ENCODE measurements at regions of chr6 and their contacts with region 1.

Region 1: GRCh38 chr6:71349395-71349794 is 60.8 kb downstream of the OGFRL1 start:
- DNase-seq: no peak
- ATAC-seq: peak; percentile 64

Region 2: GRCh38 chr6:71190809-71191208 is 158.6 kb before region 1 on chr6:
- intact Hi-C with region 1: loop called (anchors 2 kb)
- DNase-seq: no peak
- ATAC-seq: no peak

Region 3: GRCh38 chr6:71288228-71289001 is 61.0 kb before region 1 on chr6 and contains the start of gene OGFRL1:
- intact Hi-C with region 1: loop called (anchors 5 kb)
- DNase-seq: peak; percentile 87
- ATAC-seq: peak; percentile 97
- total RNA-seq, gene OGFRL1: 7.7 TPM

Region 4: DNA sequence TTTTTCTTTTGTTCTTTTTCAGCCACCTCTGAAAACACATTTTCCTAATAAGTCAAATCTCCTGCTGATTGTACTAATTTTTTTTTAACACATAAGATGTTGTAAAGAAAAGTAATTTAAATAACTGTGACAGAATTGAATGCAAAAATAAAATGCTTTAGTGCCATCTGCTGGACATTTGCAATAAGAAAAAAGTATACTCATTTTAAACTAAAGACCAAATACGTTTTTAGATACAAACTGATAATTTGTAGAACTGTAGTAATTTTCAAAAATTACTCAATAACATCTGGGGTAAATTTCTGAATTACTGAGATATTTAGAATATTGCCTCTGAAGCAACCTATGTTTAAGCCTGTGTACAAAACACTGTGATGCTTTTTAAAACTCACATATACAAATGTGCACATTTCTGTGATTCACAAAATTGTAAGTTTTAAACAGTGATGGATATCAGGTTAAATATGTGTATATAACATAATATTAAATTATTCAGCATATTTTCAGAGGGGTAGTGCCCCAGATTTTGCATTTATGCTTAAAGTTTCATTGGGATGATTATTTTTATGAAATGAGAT is 735.7 kb after region 1 on chr6:
- intact Hi-C with region 1: no loop called
- DNase-seq: no peak
- ATAC-seq: no peak